Right ventricle myocardium inferior (tissue), 1 donor: ENCODE measurements at regions of chr10 and their contacts with region 1.

Region 1: DNA sequence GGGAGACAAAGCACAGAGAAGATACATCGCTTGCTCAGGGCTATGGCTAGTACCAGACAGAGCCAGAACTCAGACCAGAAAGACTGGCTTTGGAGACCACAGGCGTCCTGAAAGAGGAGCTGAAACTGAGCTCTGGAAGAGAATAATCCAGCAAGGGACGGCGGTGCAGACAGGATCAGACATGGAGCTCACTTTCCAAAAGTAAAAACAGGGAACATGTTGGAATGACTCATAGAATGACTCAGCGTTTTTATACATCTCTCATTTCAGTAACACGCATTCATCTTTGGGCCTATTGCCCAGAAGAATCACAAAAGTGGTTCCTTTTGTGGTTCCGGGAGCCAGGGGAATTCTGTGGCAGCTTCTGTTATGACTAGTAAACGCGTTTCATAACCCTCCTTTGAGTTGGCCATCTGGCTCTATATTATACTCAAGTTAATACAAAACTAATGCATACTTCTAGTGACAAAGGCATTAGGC is 37.2 kb downstream of the PLEKHS1 start:
- DNase-seq: no peak
- ATAC-seq: peak; percentile 72

Region 2: DNA sequence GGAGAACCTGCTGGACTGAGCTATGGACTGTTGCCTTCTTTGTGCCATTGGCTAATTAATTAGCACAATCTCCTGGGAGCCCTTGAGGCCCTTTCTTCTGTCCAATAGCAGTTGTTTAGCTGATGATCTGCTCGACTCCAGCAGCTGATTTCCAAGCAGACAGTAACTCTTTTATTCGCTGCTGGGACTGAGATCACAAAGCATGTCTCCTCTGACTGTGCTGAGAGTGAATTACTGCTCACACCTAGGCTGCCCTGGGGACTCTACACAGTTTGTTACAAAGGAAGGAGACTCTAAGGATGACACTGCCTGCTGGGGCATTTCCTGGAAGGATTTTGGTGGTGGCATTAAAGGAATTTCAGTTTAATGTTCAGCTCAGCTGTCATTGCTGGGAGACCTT is 77.5 kb before region 1 on chr10:
- intact Hi-C with region 1: loop called (anchors 10 kb)
- DNase-seq: no peak
- ATAC-seq: no peak